IMR-90 (cell line): ENCODE measurements at regions of chr1 and their contacts with region 1.

Region 1: GRCh38 chr1:93113127-93113526 is 34.0 kb downstream of the MTF2 start:
- DNase-seq: no peak
- ATAC-seq: no peak
- H3K4me3 ChIP-seq: no peak overlapping the region
- H3K27ac ChIP-seq: no peak overlapping the region
- H3K4me1 ChIP-seq: no peaks in the 10 kb centered on the region
- H3K27me3 ChIP-seq: no peaks in the 10 kb centered on the region
- CTCF ChIP-seq: no peak
- POLR2A ChIP-seq: no peak
- RAD21 ChIP-seq: no peak

Region 2: DNA sequence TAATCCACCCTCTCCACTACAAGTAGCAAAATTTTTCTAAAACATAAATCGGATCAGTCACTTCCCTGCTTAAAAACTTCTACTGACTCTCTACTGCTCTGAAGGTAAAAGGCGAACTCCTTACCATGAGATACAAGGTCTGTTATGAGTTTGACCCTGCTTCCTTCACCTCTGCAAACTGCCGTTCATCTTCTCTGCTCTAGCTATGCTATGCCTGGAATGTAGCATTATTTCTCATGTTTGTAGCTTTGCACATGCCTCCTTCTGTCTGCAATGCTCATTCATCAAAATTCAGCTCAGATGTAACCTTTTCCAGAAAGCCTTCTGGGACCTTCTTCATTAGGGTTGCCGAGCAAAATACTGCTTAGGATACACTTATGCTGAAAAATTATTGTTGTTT is 250.5 kb before region 1 on chr1:
- CTCF ChIA-PET with region 1: no interaction called
- POLR2A ChIA-PET with region 1: no interaction called
- dilution Hi-C with region 1: no loop called
- in situ Hi-C with region 1: no loop called
- intact Hi-C with region 1: no loop called
- DNase-seq: no peak
- ATAC-seq: peak; percentile 55
- H3K4me3 ChIP-seq: no peak overlapping the region
- H3K27ac ChIP-seq: no peak overlapping the region
- H3K4me1 ChIP-seq: no peaks in the 10 kb centered on the region
- H3K27me3 ChIP-seq: no peaks in the 10 kb centered on the region
- CTCF ChIP-seq: no peak
- POLR2A ChIP-seq: no peak
- RAD21 ChIP-seq: no peak

Region 3: GRCh38 chr1:93095804-93096585 is 17.1 kb before region 1 on chr1:
- CTCF ChIA-PET with region 1: no interaction called
- POLR2A ChIA-PET with region 1: no interaction called
- dilution Hi-C with region 1: no loop called
- in situ Hi-C with region 1: no loop called
- intact Hi-C with region 1: no loop called
- DNase-seq: no peak
- ATAC-seq: no peak
- H3K4me3 ChIP-seq: no peak overlapping the region
- H3K27ac ChIP-seq: no peak overlapping the region
- H3K4me1 ChIP-seq: peaks cover 5% of the 10 kb centered on the region
- H3K27me3 ChIP-seq: no peaks in the 10 kb centered on the region
- CTCF ChIP-seq: no peak
- POLR2A ChIP-seq: no peak
- RAD21 ChIP-seq: no peak

Region 4: DNA sequence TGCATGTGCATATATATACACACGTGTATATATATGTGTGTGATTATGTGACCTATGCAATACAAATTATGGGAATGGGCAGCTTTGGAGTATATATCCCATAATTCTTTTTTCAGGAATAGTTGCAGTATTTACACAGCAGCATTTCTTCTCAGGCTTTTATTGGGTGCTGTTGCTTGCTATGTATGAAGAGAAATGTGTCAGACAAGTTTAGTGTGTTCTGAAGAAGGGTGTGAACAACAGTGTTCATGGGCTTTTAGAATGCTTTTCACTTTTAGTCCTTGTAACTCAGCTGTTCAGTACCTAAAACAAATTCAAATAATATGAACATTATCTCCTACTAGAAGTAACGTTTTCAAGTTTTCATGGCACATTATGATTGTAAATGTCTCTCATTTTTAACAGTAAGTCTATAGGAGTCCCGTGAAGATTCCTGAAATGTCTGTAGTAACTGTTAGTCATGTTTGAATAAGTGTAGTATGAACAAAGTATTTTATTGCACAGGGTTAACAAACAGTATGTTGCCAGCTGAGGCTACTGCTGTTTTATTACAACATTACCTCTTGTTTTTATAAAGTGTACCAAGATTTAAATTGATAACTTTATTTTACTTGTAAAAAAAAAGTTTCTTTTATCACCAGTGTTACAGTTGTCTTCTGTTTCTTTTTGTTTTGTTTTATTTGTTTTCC is 24.6 kb after region 1 on chr1:
- CTCF ChIA-PET with region 1: interaction called, 4 read pairs
- POLR2A ChIA-PET with region 1: no interaction called
- dilution Hi-C with region 1: no loop called
- in situ Hi-C with region 1: no loop called
- intact Hi-C with region 1: loop called (anchors 2 kb)
- DNase-seq: no peak
- ATAC-seq: peak; percentile 46
- H3K4me3 ChIP-seq: no peak overlapping the region
- H3K27ac ChIP-seq: no peak overlapping the region
- H3K4me1 ChIP-seq: no peaks in the 10 kb centered on the region
- H3K27me3 ChIP-seq: no peaks in the 10 kb centered on the region
- CTCF ChIP-seq: no peak
- POLR2A ChIP-seq: no peak
- RAD21 ChIP-seq: no peak